Transverse colon (tissue), 4 donors: ENCODE measurements at regions of chr14 and their contacts with region 1.

Region 1: DNA sequence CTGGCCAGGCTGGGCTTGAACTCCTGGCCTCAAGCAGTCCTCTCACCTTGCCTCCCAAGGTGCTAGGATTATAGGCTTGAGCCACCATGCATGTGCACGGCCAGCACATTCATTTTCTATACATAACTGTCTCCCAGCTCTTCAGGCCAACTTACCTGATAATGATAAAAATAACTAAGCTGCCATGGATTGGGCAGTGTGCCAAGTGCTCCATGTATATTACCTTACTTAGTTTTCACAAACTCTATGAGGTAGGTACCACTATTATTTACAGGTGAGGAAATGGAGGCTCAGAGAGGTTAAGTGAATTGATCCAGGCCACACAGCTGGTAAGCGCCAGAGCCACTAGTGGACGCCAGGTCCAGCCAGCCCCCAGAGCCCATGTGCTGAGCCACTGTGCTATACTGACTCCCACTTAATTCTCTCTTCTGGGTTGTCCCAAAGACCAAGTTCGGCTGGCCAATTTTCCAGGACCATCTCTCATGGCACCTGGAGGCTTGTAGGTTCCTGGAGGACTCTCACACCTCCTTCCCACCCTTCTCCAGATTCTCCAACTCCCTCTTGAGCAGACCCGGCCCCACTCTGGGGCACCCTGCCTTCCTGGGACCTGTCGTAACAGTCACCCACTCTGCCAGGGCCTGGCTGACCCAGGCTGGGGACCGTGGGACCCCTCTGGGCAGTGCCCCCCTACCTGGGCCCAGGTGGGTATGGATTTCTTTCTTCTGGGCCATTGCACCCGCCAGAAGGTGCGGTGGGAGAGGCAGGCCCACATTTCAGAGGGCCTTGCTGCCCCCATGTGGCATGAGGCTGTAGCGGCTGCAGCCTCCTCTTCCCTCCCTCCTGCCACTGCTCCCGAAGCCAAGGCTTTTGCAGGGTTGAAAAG is 30.2 kb upstream of the CIPC start:
- DNase-seq: peak; percentile 78
- H3K4me3 ChIP-seq: no peak overlapping the region
- H3K27ac ChIP-seq: no peak overlapping the region
- H3K4me1 ChIP-seq: peaks cover 4 to 17% (median 7%) of the 10 kb centered on the region in 4 donors
- H3K27me3 ChIP-seq: no peaks in the 10 kb centered on the region
- CTCF ChIP-seq: peak; percentile 73 to 89 (median 86)
- EP300 ChIP-seq: no peak
- POLR2A ChIP-seq: no peak

Region 2: DNA sequence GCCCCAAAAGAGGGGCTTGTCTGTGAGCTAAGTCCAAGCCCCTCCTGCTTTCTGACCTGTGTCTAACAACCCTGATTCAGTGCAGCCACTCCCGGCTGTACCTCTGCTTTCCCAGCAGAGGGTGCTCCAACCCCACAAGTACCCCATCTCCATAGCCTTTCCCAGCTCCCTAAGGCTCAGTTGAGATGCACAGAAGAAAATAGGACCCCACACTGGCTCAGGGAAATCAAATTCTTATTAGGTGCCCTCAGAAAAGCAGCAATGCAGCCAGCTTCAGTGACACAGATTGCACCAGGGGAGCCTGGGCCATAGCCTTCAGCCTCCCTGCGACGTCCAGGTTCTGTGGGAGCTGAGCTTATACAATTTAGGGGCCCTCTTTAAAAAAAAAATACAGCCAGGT is 191.8 kb before region 1 on chr14:
- in situ Hi-C with region 1: loop called in 2 of 4 experiments (anchors 5 to 10 kb)
- intact Hi-C with region 1: loop called (anchors 2 kb)
- DNase-seq: peak; percentile 54
- H3K4me3 ChIP-seq: no peak overlapping the region
- H3K27ac ChIP-seq: no peak overlapping the region
- H3K4me1 ChIP-seq: no peaks in the 10 kb centered on the region
- H3K27me3 ChIP-seq: no peaks in the 10 kb centered on the region
- CTCF ChIP-seq: peak; percentile 85 to 92 (median 89)
- EP300 ChIP-seq: no peak
- POLR2A ChIP-seq: no peak

Region 3: DNA sequence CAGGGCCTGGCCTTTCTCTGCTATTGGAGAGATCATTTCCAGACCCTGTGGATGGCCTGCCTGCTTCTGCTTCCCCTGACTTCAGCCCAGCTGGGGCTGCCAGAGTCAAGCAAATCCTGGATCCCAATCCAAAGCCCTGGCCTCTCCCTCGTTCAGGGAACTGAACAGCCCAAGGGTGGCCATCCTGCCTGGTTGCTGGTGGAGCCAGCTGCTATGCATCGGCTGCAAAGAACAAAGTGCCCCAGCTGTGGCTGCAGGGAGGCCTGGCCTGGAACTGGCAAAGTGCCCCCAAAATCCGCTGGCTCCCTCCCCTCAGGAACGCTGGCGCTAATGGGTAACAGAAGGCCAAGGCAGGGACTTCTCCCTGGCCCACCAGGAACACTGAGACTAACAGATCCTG is 185.2 kb before region 1 on chr14:
- in situ Hi-C with region 1: loop called in 1 of 4 experiments (anchors 10 kb)
- intact Hi-C with region 1: no loop called
- DNase-seq: no peak
- H3K4me3 ChIP-seq: no peak overlapping the region
- H3K27ac ChIP-seq: no peak overlapping the region
- H3K4me1 ChIP-seq: peaks cover 0 to 4% (median 0%) of the 10 kb centered on the region in 4 donors
- H3K27me3 ChIP-seq: no peaks in the 10 kb centered on the region
- CTCF ChIP-seq: no peak
- EP300 ChIP-seq: no peak
- POLR2A ChIP-seq: no peak

Region 4: DNA sequence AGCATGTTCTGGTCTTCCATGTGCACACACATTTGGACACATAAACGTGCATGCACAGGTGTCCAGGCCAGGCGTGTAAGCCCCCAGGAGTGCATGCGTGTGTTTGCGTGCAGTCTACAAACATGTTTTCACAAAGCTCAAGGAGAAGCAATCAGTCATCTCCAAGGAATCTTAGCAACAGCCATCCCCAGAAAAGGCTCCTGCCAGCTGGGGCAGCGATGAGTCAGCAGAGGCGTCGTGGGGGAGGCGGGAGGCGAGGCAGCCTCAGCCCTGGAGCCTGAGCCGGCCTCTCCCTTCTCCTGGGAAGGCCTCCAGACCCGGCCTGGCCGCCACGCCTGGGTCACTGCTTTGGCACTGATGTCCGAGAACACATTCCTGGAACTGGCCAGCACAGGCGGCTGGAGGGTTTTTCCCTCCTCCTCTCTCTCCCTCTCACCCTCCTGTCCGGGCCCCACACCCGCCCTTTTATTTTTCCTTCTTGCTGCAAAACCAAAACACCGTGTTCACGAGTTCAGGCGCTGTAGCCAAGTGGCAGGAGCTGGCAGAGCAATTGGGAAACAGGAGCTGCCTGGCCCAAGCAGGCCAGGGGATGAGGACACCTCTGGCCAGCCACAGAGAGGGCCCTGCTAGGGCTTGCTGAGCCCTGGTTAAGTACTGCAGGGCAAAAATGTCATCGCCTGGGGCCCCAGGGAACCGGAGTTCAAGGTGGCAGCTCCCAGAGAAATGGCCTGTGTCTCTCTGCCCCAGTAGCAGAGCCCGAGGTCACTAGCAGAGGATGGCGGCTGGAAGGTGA is 148.9 kb before region 1 on chr14:
- in situ Hi-C with region 1: loop called in 2 of 4 experiments (anchors 10 kb)
- intact Hi-C with region 1: no loop called
- DNase-seq: peak; percentile 89
- H3K4me3 ChIP-seq: no peak overlapping the region
- H3K27ac ChIP-seq: peak overlapping the region; percentile 84 to 98 (median 88)
- H3K4me1 ChIP-seq: peaks cover 37 to 59% (median 46%) of the 10 kb centered on the region in 4 donors
- H3K27me3 ChIP-seq: no peaks in the 10 kb centered on the region
- CTCF ChIP-seq: peak in 2 of 5 experiments; percentile 4 to 32
- EP300 ChIP-seq: peak; percentile 39
- POLR2A ChIP-seq: peak; percentile 9

Region 5: DNA sequence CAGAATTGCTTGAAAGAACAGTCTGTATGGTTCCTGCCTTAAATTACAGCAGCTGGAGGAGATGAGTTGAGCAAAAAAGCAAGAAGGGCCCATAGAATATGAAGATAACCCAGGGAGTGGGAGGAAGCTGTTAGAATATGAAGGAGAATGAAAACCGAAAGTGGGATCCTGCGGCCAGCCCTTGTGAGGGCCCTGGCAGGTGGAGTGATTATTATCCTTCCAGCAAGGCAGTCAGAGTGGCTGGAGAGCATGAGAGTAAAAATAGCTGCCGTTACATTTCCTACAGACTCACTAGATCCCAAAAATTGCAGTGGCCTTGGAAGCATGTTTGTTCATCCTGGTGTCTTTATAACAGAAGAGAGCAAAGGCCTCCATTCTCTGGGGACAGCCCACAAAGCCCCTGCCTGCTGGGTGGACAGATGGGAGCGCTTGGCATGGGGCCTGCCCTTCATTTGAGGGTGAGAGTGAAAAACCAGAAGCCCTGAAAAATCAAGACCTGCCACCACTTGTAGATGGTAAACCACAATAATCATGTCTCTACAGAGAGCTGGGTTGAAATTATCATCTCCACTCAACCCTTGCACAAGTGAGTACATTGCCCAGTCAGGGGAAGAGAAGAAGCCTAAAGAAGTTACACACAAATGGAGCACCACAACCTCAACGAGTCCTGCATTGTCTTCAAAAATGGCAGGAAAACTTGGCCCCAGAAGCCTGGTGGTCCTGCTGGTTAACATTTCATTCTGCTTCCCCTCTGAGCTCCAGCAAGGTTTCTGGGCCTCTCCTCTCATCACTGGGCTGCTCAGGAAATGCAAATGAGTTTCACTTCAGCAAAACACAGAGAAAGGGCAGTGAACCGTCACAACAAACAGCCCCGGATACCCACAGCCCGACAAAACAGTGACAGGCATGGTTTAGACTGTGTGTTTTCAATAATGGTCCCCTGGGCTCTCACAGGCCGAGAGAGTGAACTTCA is 53.2 kb after region 1 on chr14:
- in situ Hi-C with region 1: no loop called
- intact Hi-C with region 1: no loop called
- DNase-seq: peak; percentile 59
- H3K4me3 ChIP-seq: no peak overlapping the region
- H3K27ac ChIP-seq: peak overlapping the region; percentile 75 to 84 (median 81)
- H3K4me1 ChIP-seq: peaks cover 28 to 57% (median 39%) of the 10 kb centered on the region in 4 donors
- H3K27me3 ChIP-seq: peaks cover 10% of the 10 kb centered on the region
- CTCF ChIP-seq: no peak
- EP300 ChIP-seq: no peak
- POLR2A ChIP-seq: no peak

Region 6: GRCh38 chr14:78627114-78627513 is 1559.2 kb after region 1 on chr14:
- in situ Hi-C with region 1: no loop called
- intact Hi-C with region 1: no loop called
- DNase-seq: no peak
- H3K4me3 ChIP-seq: no peak overlapping the region
- H3K27ac ChIP-seq: no peak overlapping the region
- H3K4me1 ChIP-seq: no peaks in the 10 kb centered on the region
- H3K27me3 ChIP-seq: no peaks in the 10 kb centered on the region
- CTCF ChIP-seq: no peak
- EP300 ChIP-seq: no peak
- POLR2A ChIP-seq: no peak